ENCODE measurements at regions of chr6 and their contacts with region 1.

Region 1: GRCh38 chr6:149235130-149235561 is 82.4 kb upstream of the TAB2 start:
- DNase-seq: no peak
- H3K4me3 Mint-ChIP-seq: no peak overlapping the region
- H3K27ac Mint-ChIP-seq: peak overlapping the region; percentile 95
- H3K4me1 Mint-ChIP-seq: peaks cover 49% of the 10 kb centered on the region
- H3K27me3 Mint-ChIP-seq: no peaks in the 10 kb centered on the region

Region 2: GRCh38 chr6:148203970-148204369 is 1031.2 kb before region 1 on chr6:
- CTCF ChIA-PET with region 1: no interaction called
- intact Hi-C with region 1: loop called (anchors 5 kb)
- DNase-seq: peak; percentile 87
- H3K4me3 Mint-ChIP-seq: peak overlapping the region; percentile 48
- H3K27ac Mint-ChIP-seq: peak overlapping the region; percentile 85
- H3K4me1 Mint-ChIP-seq: peaks cover 50% of the 10 kb centered on the region
- H3K27me3 Mint-ChIP-seq: peaks cover 72% of the 10 kb centered on the region

Region 3: DNA sequence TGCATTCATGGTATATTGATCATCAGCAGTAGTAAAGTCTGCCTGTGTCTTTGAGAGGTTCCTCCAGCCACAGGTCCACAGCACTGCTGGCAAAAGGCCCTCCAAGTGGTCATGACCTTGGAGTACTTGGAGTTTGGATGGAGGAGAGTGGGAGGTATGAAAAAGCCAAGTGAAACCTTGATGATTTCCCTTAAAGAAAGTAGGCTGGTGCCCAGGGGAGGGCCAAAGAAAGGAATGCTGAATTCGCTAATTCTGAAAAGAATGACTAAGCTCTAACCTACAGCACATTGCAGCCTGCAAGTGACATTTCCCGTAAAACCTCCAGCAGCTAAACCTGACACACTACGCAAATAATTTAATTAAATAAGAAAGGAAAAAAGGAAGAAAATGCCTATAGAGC is 141.0 kb before region 1 on chr6:
- CTCF ChIA-PET with region 1: no interaction called
- intact Hi-C with region 1: loop called (anchors 2 kb)
- DNase-seq: peak; percentile 31
- H3K4me3 Mint-ChIP-seq: no peak overlapping the region
- H3K27ac Mint-ChIP-seq: peak overlapping the region; percentile 80
- H3K4me1 Mint-ChIP-seq: peaks cover 40% of the 10 kb centered on the region
- H3K27me3 Mint-ChIP-seq: no peaks in the 10 kb centered on the region

Region 4: DNA sequence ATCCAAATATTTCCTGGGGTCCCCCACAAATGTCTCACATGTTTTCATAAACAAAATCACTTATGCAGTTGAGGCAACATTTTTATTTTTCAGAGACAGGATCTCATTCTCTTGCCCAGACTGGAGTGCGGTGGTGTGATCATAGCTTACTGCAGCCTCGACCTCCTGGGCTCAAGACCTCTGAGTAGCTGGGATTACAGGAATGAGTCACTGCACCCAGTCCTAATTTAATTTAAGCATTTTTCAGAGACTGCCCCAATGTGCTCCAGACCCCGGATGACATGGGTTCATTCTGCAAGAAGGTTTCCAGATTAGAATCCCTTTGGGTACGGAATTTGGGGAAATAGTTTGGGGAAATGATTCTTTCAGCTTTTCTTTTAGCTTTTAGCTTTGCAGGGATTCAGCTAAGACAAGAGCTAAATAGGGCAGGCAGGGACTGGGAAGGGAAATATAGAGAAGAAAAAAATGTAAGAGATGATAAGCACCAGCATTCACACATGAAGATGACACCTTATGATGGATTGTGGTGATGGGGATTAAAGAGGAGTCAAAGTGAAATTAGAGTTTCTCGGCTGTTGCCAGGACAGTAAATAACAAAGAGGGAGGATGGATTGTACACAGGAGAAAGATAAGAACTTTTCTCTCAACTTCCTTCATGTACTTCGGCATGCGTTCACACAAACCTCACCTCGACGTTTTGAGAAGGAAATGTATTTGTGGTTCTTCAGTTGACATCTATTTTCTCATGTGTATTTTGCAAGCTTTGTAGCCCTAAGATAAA is 87.0 kb before region 1 on chr6:
- CTCF ChIA-PET with region 1: no interaction called
- intact Hi-C with region 1: loop called (anchors 2 kb)
- DNase-seq: peak; percentile 27
- H3K4me3 Mint-ChIP-seq: no peak overlapping the region
- H3K27ac Mint-ChIP-seq: peak overlapping the region; percentile 56
- H3K4me1 Mint-ChIP-seq: peaks cover 58% of the 10 kb centered on the region
- H3K27me3 Mint-ChIP-seq: no peaks in the 10 kb centered on the region

Region 5: DNA sequence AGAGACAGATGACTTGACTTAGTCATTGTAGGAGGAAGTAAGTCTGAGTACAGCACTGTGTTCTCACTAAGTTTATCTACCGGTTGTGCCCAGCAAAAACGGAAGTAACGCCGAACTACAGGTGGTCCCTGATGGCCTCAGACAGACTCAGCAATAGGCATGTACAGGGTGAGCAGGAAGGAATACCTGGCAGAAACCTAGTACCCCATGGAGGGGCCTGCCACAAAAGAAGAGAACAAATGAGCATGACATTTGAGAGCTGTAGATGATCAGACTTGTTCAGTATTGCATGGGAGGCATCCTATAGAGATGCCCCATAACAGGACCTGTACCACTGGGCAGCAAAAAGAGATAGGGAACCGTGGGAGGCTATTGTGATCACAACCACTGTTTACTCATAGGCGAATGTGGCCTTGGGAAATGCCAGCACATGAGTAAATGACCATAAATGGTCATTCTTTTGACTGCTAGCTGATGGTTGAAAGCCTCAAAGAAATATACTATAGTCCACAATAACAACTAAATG is 24.0 kb before region 1 on chr6:
- CTCF ChIA-PET with region 1: no interaction called
- intact Hi-C with region 1: loop called (anchors 1 kb)
- DNase-seq: peak; percentile 57
- H3K4me3 Mint-ChIP-seq: no peak overlapping the region
- H3K27ac Mint-ChIP-seq: peak overlapping the region; percentile 77
- H3K4me1 Mint-ChIP-seq: peaks cover 19% of the 10 kb centered on the region
- H3K27me3 Mint-ChIP-seq: no peaks in the 10 kb centered on the region

Region 6: GRCh38 chr6:149277621-149278020 is 42.5 kb after region 1 on chr6:
- CTCF ChIA-PET with region 1: no interaction called
- intact Hi-C with region 1: loop called (anchors 1 kb)
- DNase-seq: no peak
- H3K4me3 Mint-ChIP-seq: no peak overlapping the region
- H3K27ac Mint-ChIP-seq: no peak overlapping the region
- H3K4me1 Mint-ChIP-seq: peaks cover 29% of the 10 kb centered on the region
- H3K27me3 Mint-ChIP-seq: no peaks in the 10 kb centered on the region

Region 7: GRCh38 chr6:149380523-149380922 is 145.4 kb after region 1 on chr6:
- CTCF ChIA-PET with region 1: interaction called, 3 read pairs
- intact Hi-C with region 1: loop called (anchors 5 kb)
- DNase-seq: peak; percentile 35
- H3K4me3 Mint-ChIP-seq: no peak overlapping the region
- H3K27ac Mint-ChIP-seq: no peak overlapping the region
- H3K4me1 Mint-ChIP-seq: peaks cover 63% of the 10 kb centered on the region
- H3K27me3 Mint-ChIP-seq: no peaks in the 10 kb centered on the region

Measured in activated naive CD4-positive, alpha-beta T cell treated with anti-CD3 and anti-CD28 coated beads for 36 hours (primary cell).